ENCODE measurements at regions of chr1 and their contacts with region 1.

Region 1: DNA sequence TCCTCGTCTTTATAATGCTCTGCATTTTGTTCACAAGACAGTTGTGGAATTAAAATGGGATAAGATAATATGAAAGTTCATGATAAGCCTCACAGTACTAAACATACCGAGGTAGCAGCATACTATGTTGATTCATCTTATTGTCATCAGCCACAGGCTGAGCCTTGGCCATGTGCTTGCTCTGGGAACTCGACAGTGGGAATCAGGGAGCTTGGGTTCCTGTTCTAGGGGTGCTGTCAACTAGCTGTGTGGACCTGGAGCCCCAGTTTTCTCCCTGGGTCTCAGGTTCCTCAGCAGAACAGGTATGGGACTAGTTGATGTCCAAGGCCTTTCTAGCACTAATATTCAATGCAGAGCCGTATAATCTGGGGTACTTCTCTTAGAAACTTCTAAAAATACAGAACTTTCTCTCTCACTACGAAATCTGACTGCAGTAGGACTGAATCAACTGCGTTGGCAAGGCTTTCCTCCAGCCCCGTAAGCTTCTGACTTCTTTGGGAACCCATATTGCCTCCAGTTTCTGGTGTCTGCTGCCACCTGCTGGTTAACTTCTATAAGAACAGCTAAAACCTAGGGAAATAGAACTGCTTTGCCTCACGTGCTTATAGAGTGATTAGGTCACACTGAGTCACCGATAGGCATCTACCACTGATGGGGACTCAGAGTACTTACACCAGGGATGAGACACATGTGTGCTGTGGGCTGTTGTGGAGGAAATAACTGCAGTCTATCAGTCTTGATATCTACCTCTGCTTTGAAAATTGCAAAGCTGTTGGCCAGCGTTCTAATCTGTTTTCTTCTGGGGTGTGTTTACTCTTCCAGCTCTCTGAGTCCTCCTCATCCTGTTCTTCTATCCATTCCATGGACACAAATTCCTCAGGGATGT is 110.9 kb downstream of the RGL1 start:
- DNase-seq: peak; percentile 75 to 82
- H3K4me3 ChIP-seq: no peak overlapping the region
- H3K4me3 Mint-ChIP-seq: no peak overlapping the region
- H3K27ac Mint-ChIP-seq: peak overlapping the region; percentile 71
- H3K4me1 ChIP-seq: peaks cover 7% of the 10 kb centered on the region
- H3K4me1 Mint-ChIP-seq: peaks cover 13% of the 10 kb centered on the region
- H3K27me3 ChIP-seq: no peaks in the 10 kb centered on the region
- H3K27me3 Mint-ChIP-seq: no peaks in the 10 kb centered on the region
- CTCF ChIP-seq: peak; percentile 78 to 89

Region 2: GRCh38 chr1:183609313-183609712 is 306.6 kb before region 1 on chr1:
- CTCF ChIA-PET with region 1: interaction called, 12 read pairs
- POLR2A ChIA-PET with region 1: no interaction called
- intact Hi-C with region 1: loop called (anchors 1 kb)
- DNase-seq: peak; percentile 50 to 59
- H3K4me3 ChIP-seq: no peak overlapping the region
- H3K4me3 Mint-ChIP-seq: no peak overlapping the region
- H3K27ac Mint-ChIP-seq: peak overlapping the region; percentile 49
- H3K4me1 ChIP-seq: no peaks in the 10 kb centered on the region
- H3K4me1 Mint-ChIP-seq: no peaks in the 10 kb centered on the region
- H3K27me3 ChIP-seq: no peaks in the 10 kb centered on the region
- H3K27me3 Mint-ChIP-seq: no peaks in the 10 kb centered on the region
- CTCF ChIP-seq: peak; percentile 41 to 61

Region 3: GRCh38 chr1:183635606-183636333 is 280.1 kb before region 1 on chr1 and contains the start of gene ARPC5:
- CTCF ChIA-PET with region 1: interaction called, 5 read pairs
- POLR2A ChIA-PET with region 1: no interaction called
- intact Hi-C with region 1: loop called (anchors 1 kb)
- DNase-seq: peak; percentile 96 to 97
- H3K4me3 ChIP-seq: peak within 1 kb of the TSS; percentile 78
- H3K4me3 Mint-ChIP-seq: peak within 1 kb of the TSS; percentile 91
- H3K27ac Mint-ChIP-seq: peak within 1 kb of the TSS; percentile 90
- H3K4me1 ChIP-seq: peaks cover 41% of the 10 kb centered on the region
- H3K4me1 Mint-ChIP-seq: peaks cover 16% of the 10 kb centered on the region
- H3K27me3 ChIP-seq: no peaks in the 10 kb centered on the region
- H3K27me3 Mint-ChIP-seq: no peaks in the 10 kb centered on the region
- CTCF ChIP-seq: no peak
- total RNA-seq, gene ARPC5: 123 and 135 TPM in 2 replicates

Region 4: DNA sequence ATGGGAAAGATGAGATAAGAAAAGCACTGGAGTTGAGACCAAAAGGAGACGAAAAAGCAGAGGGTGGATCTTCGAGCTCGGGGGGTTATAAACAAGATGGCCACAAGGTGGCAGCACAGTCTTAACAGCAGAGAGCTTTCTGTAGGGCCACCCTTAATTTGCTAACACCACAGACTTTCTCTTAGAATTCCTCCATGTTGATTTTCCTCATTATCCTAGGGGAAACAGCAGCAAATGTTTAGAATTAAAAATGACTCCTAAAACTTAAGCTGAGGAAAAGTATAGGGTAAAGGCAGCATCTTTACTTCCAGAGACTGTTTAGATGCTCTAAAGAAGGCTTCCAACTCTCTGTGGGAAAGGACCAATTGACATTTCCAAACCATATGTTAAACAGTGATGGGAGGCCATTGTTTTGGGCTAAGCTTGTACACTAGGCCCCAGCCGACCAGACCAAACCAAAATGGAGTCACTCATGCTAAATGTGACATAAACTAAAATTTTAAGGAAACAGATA is 260.2 kb before region 1 on chr1:
- CTCF ChIA-PET with region 1: interaction called, 44 read pairs
- POLR2A ChIA-PET with region 1: no interaction called
- intact Hi-C with region 1: loop called (anchors 1 kb)
- DNase-seq: peak; percentile 80 to 86
- H3K4me3 ChIP-seq: no peak overlapping the region
- H3K4me3 Mint-ChIP-seq: no peak overlapping the region
- H3K27ac Mint-ChIP-seq: no peak overlapping the region
- H3K4me1 ChIP-seq: peaks cover 31% of the 10 kb centered on the region
- H3K4me1 Mint-ChIP-seq: peaks cover 41% of the 10 kb centered on the region
- H3K27me3 ChIP-seq: no peaks in the 10 kb centered on the region
- H3K27me3 Mint-ChIP-seq: no peaks in the 10 kb centered on the region
- CTCF ChIP-seq: peak; percentile 79 to 85

Region 5: GRCh38 chr1:183685112-183685713 is 230.7 kb before region 1 on chr1:
- CTCF ChIA-PET with region 1: interaction called, 24 read pairs
- POLR2A ChIA-PET with region 1: no interaction called
- intact Hi-C with region 1: loop called (anchors 1 kb)
- DNase-seq: peak in 1 of 2 experiments; percentile 64
- H3K4me3 ChIP-seq: no peak overlapping the region
- H3K4me3 Mint-ChIP-seq: no peak overlapping the region
- H3K27ac Mint-ChIP-seq: no peak overlapping the region
- H3K4me1 ChIP-seq: peaks cover 9% of the 10 kb centered on the region; the same call in 1 of the 2 replicates
- H3K4me1 Mint-ChIP-seq: peaks cover 13% of the 10 kb centered on the region
- H3K27me3 ChIP-seq: no peaks in the 10 kb centered on the region
- H3K27me3 Mint-ChIP-seq: no peaks in the 10 kb centered on the region
- CTCF ChIP-seq: peak; percentile 60 to 80

Region 6: GRCh38 chr1:183891158-183891856 is 24.6 kb before region 1 on chr1:
- CTCF ChIA-PET with region 1: interaction called, 10 read pairs
- POLR2A ChIA-PET with region 1: no interaction called
- intact Hi-C with region 1: no loop called
- DNase-seq: no peak
- H3K4me3 ChIP-seq: no peak overlapping the region
- H3K4me3 Mint-ChIP-seq: no peak overlapping the region
- H3K27ac Mint-ChIP-seq: no peak overlapping the region
- H3K4me1 ChIP-seq: peaks cover 13% of the 10 kb centered on the region; the same call in 1 of the 2 replicates
- H3K4me1 Mint-ChIP-seq: no peaks in the 10 kb centered on the region
- H3K27me3 ChIP-seq: no peaks in the 10 kb centered on the region
- H3K27me3 Mint-ChIP-seq: no peaks in the 10 kb centered on the region
- CTCF ChIP-seq: no peak